ENCODE measurements at regions of chr6 and their contacts with region 1.

Region 1: DNA sequence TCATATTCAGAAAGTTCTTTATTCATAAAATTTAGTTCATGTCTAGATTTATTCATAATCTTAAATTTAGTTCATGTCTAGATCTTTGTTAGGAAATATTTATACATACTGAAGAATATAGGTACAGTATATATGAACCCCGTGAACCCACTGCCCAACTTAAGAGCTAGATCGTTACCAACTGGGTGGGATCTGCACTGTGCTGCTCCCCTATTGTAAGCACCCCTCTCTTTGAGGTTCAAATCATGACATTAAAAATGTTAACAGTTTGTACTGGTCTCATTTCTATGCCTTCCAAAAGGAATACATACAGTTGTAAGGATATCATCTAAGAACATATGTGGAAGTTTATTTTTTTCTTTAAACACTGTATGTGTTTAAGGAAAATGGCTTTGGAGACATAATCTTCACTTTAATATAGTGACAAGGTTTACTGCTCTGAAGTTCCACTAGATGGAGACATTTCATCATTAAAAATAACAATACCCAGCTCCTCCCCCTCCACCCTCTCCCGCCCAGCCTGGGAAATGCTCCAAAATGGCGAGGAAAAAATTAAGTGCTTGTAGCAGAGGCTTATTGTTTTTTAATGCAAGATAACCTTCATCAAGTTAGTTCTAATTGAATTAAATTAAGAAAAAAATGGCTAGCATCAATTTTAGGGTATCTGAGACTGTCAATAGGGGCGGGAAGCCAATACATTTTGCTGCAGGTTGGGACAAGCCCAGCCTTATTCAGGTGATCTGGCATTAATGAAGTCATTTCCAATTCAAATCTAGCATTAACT is 104.1 kb upstream of the TRAF3IP2 start:
- DNase-seq: peak; percentile 67
- CTCF ChIP-seq: peak; percentile 24

Region 2: DNA sequence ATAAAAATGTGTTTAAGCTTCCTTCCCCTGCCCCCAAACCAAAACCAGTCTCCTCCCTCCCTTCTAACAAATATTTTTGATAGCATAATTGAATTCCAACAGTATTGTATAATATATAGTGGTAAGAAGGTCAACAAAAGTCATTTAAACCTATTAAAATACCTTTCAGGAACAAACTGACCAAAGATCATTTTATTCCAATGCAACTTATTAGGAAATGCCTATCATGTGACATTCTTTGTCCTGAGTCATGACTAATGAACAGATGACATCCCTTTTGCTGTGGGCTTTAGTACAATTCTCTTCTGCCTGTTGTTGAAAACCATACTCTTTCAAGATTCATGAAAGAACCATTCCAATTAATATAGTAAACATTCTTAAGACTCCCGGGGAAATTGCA is 52.7 kb before region 1 on chr6:
- in situ Hi-C with region 1: no loop called
- DNase-seq: no peak
- CTCF ChIP-seq: no peak

Region 3: DNA sequence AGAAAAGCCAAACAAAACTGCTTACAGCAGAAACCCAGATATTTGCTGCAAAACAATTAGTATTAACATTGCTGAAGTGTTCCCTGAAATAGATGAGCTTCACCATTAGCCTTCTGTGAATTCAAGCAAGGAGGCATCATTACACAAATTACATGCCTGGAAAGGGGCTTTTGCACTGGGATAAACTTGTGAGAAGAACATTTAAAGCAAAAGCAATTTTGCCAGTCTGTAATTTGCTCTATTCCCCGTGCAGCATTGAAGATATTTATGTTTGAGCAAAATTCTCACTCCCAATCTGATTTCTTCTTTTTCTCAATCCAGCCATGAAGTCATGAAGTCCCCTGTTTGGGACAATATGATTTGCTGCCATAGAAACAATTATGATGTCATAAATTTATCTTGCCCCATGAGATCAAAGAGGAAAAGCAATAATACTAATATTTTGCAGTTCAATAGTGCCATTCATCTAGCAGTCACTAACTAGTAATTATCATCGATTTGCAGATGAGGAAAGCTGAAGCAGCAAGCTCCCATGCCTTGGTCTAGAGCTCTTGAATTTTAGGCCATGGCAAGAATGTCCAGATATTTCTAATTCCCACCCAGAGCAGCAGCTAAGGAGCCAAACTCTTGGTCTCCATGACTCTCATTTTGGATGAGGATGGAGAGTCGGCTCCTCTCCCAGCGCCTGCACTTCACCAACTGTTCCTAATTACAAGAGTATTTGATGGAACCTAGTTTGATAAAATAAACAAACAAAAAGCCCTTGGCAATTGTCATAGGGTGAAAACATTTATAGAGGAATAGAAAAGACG is 294.6 kb after region 1 on chr6:
- in situ Hi-C with region 1: loop called (anchors 5 kb)
- DNase-seq: no peak
- CTCF ChIP-seq: no peak

Measured in GM13976 (cell line).